ENCODE measurements at regions of chr13 and their contacts with region 1.

Region 1: GRCh38 chr13:44577236-44578066 is 1.3 kb upstream of the TSC22D1 start:
- DNase-seq: peak; percentile 91 to 95 (median 94)
- ATAC-seq: peak; percentile 85
- H3K4me3 ChIP-seq: peak overlapping the region; percentile 66
- H3K4me3 Mint-ChIP-seq: peak overlapping the region; percentile 78 to 99 (median 93)
- H3K27ac ChIP-seq: peak overlapping the region; percentile 84
- H3K27ac Mint-ChIP-seq: peak overlapping the region; percentile 74 to 95 (median 93)
- H3K4me1 ChIP-seq: peaks cover 16 to 27% of the 10 kb centered on the region in 2 donors
- H3K4me1 Mint-ChIP-seq: peaks cover 31 to 40% (median 38%) of the 10 kb centered on the region in 7 donors
- H3K27me3 ChIP-seq: no peaks in the 10 kb centered on the region
- H3K27me3 Mint-ChIP-seq: peaks cover 0 to 56% (median 0%) of the 10 kb centered on the region in 5 donors

Region 2: DNA sequence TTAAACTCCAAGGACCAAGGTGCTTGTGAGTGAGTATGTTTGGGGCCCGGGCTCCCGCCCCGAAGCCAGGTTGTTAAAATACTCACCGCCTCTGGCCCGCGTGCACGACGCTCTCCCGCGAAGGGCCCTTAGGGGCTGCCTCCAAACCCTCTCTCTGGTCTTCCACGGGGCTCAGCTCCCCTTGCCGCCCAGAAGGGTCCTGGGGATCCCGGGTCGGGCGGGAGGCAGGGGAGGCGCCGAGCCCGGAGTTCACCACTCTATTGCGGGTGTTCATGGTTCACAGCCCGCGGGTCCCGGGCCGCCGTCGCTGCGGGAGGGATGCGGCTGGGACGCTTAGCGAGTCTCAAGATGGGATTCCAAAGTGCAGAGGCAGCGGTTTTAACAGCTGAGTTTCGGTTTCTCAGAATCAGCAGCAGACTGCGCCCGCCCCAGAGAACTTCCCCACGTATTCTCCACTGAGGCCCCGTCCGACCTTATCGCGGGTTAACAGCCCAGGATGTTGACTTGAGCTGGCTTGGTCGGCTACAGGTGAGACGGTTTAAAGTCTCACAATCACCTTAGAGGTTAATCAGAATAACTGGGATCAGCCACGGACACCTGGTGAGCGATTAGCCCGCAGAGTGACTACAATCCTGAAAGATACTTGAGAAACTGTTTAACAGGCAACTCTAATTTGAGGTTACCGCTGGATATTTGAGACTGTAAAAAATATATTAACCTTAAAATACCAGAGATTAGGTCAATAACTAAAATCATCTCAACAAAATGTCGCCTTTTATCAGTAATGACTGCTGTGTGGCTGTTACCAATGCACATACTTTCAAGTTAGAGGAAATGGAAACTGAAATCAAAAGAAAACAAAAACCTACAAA is 1585.3 kb before region 1 on chr13 and contains the start of gene EPSTI1:
- CTCF ChIA-PET with region 1: no interaction called
- POLR2A ChIA-PET with region 1: interaction called, 3 read pairs
- intact Hi-C with region 1: loop called in 1 of 2 experiments (anchors 2 kb)
- DNase-seq: peak; percentile 61 to 84 (median 77)
- ATAC-seq: peak; percentile 88
- H3K4me3 ChIP-seq: peak within 1 kb of the TSS; percentile 77
- H3K4me3 Mint-ChIP-seq: peak within 1 kb of the TSS; percentile 92 to 98 (median 96)
- H3K27ac ChIP-seq: peak within 1 kb of the TSS; percentile 94
- H3K27ac Mint-ChIP-seq: peak within 1 kb of the TSS; percentile 99 to 100 (median 100)
- H3K4me1 ChIP-seq: peaks cover 13 to 15% of the 10 kb centered on the region in 2 donors
- H3K4me1 Mint-ChIP-seq: peaks cover 27 to 73% (median 51%) of the 10 kb centered on the region in 7 donors
- H3K27me3 ChIP-seq: no peaks in the 10 kb centered on the region
- H3K27me3 Mint-ChIP-seq: no peaks in the 10 kb centered on the region
- total RNA-seq, gene EPSTI1: 8.4 to 125 (median 11.0) TPM

Region 3: DNA sequence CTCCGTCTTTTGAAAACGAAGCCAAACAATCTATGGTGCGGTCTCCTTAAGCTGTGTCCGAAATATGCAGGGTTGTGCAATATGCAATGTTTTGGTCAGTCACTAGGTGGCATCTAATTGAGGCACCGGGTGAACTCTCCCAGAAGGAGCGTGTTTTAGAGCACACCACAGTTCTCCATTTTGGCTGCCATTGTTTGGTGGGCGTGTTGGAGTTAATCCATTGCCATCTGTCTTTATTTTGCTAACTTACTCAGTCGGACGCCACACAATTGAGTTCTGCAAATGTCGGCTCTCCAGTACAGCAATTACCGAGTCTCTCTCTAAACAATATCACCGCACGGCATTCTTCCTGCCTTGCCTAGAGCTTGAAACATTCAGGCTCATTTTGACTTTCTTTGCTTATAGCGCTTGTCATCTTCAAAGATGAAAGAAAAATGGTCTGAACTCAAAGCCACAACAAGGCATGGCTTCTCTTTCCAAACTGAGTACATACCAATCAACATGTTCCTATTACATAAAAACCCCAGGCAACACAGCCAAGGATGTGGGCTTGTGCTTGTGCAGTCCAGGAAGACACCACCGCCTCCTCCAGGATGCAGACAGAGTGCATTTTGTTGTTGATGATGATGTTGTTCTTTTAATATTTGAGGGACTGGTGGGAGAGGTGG is 385.8 kb before region 1 on chr13:
- CTCF ChIA-PET with region 1: no interaction called
- POLR2A ChIA-PET with region 1: no interaction called
- intact Hi-C with region 1: loop called in 1 of 2 experiments (anchors 5 kb)
- DNase-seq: peak in 7 of 9 donors; percentile 63 to 81 (median 72)
- ATAC-seq: peak; percentile 88
- H3K4me3 ChIP-seq: peak overlapping the region; percentile 0
- H3K4me3 Mint-ChIP-seq: peak overlapping the region; percentile 6 to 71 (median 59)
- H3K27ac ChIP-seq: no peak overlapping the region
- H3K27ac Mint-ChIP-seq: peak overlapping the region in 8 of 9 donors; percentile 75 to 97 (median 86)
- H3K4me1 ChIP-seq: peaks cover 0 to 6% of the 10 kb centered on the region in 2 donors
- H3K4me1 Mint-ChIP-seq: peaks cover 16 to 39% (median 35%) of the 10 kb centered on the region in 7 donors
- H3K27me3 ChIP-seq: no peaks in the 10 kb centered on the region
- H3K27me3 Mint-ChIP-seq: peaks cover 0 to 44% (median 0%) of the 10 kb centered on the region in 5 donors

Region 4: DNA sequence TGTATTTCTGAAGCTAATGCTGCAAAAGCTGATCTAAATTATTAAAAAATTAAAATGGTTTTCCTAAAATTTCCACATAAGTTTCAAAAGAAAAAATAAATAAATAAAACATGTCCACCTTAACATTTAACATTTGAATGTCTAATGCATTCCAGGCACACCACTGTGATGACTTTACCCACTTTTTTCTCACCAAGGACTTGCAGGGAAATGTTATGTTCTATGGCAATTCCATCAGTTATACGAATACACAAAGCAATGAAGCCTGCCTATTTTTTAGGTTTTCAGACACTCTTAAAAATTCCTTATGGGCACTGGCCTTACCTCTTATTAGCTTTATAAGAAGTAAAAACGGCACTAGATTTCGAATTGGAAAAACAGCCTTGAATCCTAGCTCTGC is 11.6 kb before region 1 on chr13:
- CTCF ChIA-PET with region 1: no interaction called
- POLR2A ChIA-PET with region 1: no interaction called
- intact Hi-C with region 1: loop called in 1 of 2 experiments (anchors 1 kb)
- DNase-seq: no peak
- ATAC-seq: no peak
- H3K4me3 ChIP-seq: no peak overlapping the region
- H3K4me3 Mint-ChIP-seq: no peak overlapping the region
- H3K27ac ChIP-seq: no peak overlapping the region
- H3K27ac Mint-ChIP-seq: no peak overlapping the region
- H3K4me1 ChIP-seq: peaks cover 0 to 9% of the 10 kb centered on the region in 2 donors
- H3K4me1 Mint-ChIP-seq: peaks cover 0 to 54% (median 47%) of the 10 kb centered on the region in 7 donors
- H3K27me3 ChIP-seq: no peaks in the 10 kb centered on the region
- H3K27me3 Mint-ChIP-seq: peaks cover 0 to 23% (median 0%) of the 10 kb centered on the region in 5 donors

Region 5: DNA sequence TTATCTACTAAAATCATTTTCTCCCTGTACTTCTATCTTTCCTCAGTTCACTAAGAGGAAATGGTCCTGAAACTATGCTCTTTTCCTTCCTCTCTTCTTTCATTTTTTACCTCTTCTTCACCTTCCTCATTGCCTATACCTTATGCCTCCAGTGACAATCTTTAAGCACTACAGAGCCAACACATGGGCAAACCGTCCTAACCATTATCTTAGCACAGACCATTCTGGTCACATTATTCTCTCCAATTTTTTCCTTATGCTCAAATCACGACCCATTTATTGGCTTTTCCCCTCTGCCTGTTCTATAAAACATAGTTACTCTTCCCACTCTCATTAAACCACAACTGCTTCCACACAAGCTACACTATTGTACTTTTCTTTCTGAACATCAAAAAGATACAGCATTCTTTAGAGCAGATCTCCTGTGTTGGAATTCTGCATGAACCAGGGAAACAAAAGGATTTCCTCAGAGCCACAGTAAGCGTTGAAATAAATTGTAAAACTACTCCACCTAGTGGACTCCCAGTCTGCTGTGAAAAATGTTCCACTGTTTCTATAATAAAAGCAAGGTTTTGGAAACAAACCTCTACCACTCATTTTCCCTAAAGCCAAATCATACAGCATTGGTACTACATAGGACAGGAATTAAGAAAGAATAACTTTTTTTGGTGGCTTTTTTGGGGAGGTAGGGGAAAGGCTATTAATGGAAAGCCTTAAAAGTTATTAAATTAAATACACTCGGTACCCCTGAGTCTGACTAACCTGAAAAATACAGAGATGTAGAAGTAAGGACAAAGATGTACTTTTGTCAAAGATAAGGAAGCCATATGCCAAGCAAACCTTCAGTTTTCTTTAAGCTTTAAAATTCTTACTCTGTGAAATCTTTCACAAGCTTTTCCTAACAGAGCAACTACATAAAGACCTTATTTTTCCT is 392.4 kb after region 1 on chr13:
- CTCF ChIA-PET with region 1: no interaction called
- POLR2A ChIA-PET with region 1: no interaction called
- intact Hi-C with region 1: loop called in 1 of 2 experiments (anchors 5 kb)
- DNase-seq: peak in 5 of 9 donors; percentile 13 to 27 (median 18)
- ATAC-seq: peak; percentile 51
- H3K4me3 ChIP-seq: no peak overlapping the region
- H3K4me3 Mint-ChIP-seq: no peak overlapping the region
- H3K27ac ChIP-seq: no peak overlapping the region
- H3K27ac Mint-ChIP-seq: no peak overlapping the region
- H3K4me1 ChIP-seq: no peaks in the 10 kb centered on the region
- H3K4me1 Mint-ChIP-seq: no peaks in the 10 kb centered on the region
- H3K27me3 ChIP-seq: no peaks in the 10 kb centered on the region
- H3K27me3 Mint-ChIP-seq: no peaks in the 10 kb centered on the region

Region 6: GRCh38 chr13:45367358-45367757 is 789.9 kb after region 1 on chr13:
- CTCF ChIA-PET with region 1: no interaction called
- POLR2A ChIA-PET with region 1: no interaction called
- intact Hi-C with region 1: loop called in 1 of 2 experiments (anchors 1 kb)
- DNase-seq: peak; percentile 38 to 93 (median 82)
- ATAC-seq: peak; percentile 99
- H3K4me3 ChIP-seq: no peak overlapping the region
- H3K4me3 Mint-ChIP-seq: peak overlapping the region; percentile 48 to 80 (median 67)
- H3K27ac ChIP-seq: peak overlapping the region; percentile 31
- H3K27ac Mint-ChIP-seq: peak overlapping the region; percentile 81 to 96 (median 90)
- H3K4me1 ChIP-seq: peaks cover 25 to 27% of the 10 kb centered on the region in 2 donors
- H3K4me1 Mint-ChIP-seq: peaks cover 48 to 62% (median 60%) of the 10 kb centered on the region in 7 donors
- H3K27me3 ChIP-seq: no peaks in the 10 kb centered on the region
- H3K27me3 Mint-ChIP-seq: no peaks in the 10 kb centered on the region

Region 7: DNA sequence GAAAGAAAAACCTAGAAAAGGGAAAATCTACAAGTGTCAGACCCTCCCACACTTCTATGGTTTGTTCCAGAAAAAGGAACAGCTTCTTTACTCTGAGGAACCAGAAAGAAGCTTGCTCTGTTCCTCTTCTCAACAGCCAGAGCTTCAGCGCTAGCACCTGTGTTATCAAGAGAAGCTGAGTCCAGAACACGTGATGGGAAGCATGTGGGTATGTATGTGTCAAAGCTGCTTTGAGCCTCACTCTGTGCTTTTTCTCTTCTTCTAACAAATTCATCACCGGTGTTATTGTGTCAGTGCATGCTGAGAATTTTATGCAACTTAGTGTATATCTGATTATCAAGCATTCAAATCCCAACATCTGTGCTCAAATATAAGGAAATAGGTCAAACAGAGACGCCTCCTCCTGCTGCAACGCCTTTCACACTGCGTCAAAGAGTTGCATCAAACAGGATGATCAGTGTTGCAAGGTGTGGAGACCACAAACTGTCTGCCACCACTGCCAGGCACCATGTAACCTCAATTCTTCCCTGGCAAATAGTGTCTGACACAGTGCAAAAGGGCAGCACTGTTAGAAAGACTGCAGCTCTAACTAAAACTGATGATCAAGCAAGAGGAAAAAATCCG is 1718.2 kb after region 1 on chr13:
- CTCF ChIA-PET with region 1: no interaction called
- POLR2A ChIA-PET with region 1: no interaction called
- intact Hi-C with region 1: loop called in 1 of 2 experiments (anchors 5 kb)
- DNase-seq: peak in 8 of 9 donors; percentile 28 to 90 (median 88)
- ATAC-seq: peak; percentile 94
- H3K4me3 ChIP-seq: peak overlapping the region; percentile 12
- H3K4me3 Mint-ChIP-seq: peak overlapping the region; percentile 4 to 87 (median 76)
- H3K27ac ChIP-seq: peak overlapping the region; percentile 77
- H3K27ac Mint-ChIP-seq: peak overlapping the region; percentile 92 to 99 (median 96)
- H3K4me1 ChIP-seq: peaks cover 35 to 52% of the 10 kb centered on the region in 2 donors
- H3K4me1 Mint-ChIP-seq: peaks cover 36 to 73% (median 68%) of the 10 kb centered on the region in 7 donors
- H3K27me3 ChIP-seq: no peaks in the 10 kb centered on the region
- H3K27me3 Mint-ChIP-seq: no peaks in the 10 kb centered on the region